ENCODE measurements at regions of chr19 and their contacts with region 1.

Region 1: GRCh38 chr19:10144361-10144760 is 24.7 kb upstream of the EIF3G start:
- DNase-seq: no peak
- H3K27ac ChIP-seq: no peak overlapping the region
- CTCF ChIP-seq: no peak

Region 2: DNA sequence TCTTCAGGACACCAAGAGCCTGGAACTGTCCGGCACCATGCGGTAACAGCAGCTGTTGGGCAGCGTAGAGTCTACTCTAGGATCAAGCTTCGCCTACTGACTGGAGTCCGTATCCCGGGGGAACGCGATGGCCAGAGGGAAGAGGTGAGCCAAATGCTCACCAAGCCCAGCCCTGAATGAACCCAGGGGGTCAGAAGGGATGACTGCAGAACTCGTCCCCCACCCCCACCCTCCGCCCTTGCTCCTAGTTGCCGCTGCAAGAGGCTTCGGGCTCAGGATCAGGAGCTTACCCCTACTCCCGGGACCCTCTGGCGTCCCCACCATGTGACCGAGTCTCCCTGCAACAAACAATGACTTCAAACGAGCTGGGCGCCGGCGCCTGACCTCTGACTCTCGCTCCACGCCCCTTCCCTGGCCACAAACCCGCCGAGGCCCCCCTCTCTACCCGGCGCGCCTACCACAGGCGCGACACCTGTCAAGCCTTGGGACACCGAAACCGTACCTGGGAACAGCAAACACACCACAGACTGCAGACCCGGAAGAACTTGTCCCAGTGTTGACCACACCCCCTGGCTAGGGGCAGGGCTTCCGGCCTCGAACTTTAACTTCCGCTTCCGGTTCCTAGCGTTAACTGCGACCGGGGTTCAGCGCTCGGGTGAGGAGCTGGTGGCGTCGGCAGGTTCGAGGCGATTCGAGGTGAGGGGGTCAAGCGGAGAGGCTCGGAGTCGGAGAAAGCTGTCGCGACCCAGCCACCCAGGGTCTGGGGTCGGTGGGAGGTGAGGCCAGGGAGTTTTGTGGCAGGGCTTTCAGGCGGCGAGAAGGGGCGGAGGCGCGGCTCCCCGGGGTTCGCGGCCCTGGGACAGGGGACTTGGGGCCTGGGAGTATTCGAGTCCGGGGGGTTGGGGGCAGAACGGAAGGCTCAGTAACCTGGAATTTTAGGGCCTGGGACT is 316.8 kb before region 1 on chr19 and contains the start of gene UBL5:
- CTCF ChIA-PET with region 1: no interaction called
- POLR2A ChIA-PET with region 1: no interaction called
- DNase-seq: peak; percentile 94
- H3K27ac ChIP-seq: peak within 1 kb of the TSS; percentile 73
- CTCF ChIP-seq: no peak

Region 3: GRCh38 chr19:10168386-10168948 is 24.1 kb after region 1 on chr19:
- CTCF ChIA-PET with region 1: no interaction called
- POLR2A ChIA-PET with region 1: no interaction called
- DNase-seq: no peak
- H3K27ac ChIP-seq: no peak overlapping the region
- CTCF ChIP-seq: no peak

Region 4: GRCh38 chr19:11612816-11613511 is 1468.6 kb after region 1 on chr19:
- CTCF ChIA-PET with region 1: no interaction called
- POLR2A ChIA-PET with region 1: interaction called, 11 read pairs
- DNase-seq: no peak
- H3K27ac ChIP-seq: no peak overlapping the region
- CTCF ChIP-seq: no peak

Measured in RWPE1 (cell line).